IMR-90 (cell line): ENCODE measurements at regions of chr10 and their contacts with region 1.

Region 1: DNA sequence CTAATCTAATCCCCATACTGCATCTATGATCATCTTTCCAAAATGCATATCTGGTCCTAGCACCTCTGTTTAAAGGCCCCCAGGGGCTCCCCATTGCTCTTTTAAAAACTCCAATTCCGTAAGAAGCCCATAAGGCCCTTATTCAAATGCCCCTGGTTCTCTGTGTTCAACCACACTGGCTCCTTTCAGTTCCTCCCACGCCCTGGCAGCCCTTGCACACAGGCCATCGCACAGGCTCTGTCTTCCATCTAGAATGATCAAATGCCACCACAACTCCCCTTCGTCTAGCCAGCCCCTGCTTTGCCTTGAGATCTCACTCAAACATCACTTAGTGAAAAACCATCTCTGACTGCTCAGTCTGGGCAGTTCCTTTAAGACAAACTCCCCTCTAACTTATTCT is 112.9 kb upstream of the LYZL2 start:
- DNase-seq: no peak
- ATAC-seq: no peak
- H3K4me3 ChIP-seq: no peak overlapping the region
- H3K27ac ChIP-seq: no peak overlapping the region
- H3K4me1 ChIP-seq: peaks cover 10% of the 10 kb centered on the region
- H3K27me3 ChIP-seq: no peaks in the 10 kb centered on the region
- CTCF ChIP-seq: no peak
- POLR2A ChIP-seq: no peak
- RAD21 ChIP-seq: no peak

Region 2: GRCh38 chr10:31508882-31509281 is 766.4 kb after region 1 on chr10:
- CTCF ChIA-PET with region 1: no interaction called
- POLR2A ChIA-PET with region 1: no interaction called
- dilution Hi-C with region 1: no loop called
- in situ Hi-C with region 1: loop called (anchors 10 kb)
- intact Hi-C with region 1: no loop called
- DNase-seq: peak; percentile 59
- ATAC-seq: peak; percentile 57
- H3K4me3 ChIP-seq: no peak overlapping the region
- H3K27ac ChIP-seq: no peak overlapping the region
- H3K4me1 ChIP-seq: peaks cover 9% of the 10 kb centered on the region
- H3K27me3 ChIP-seq: no peaks in the 10 kb centered on the region
- CTCF ChIP-seq: no peak
- POLR2A ChIP-seq: no peak
- RAD21 ChIP-seq: no peak

Region 3: GRCh38 chr10:31819391-31819820 is 1076.9 kb after region 1 on chr10:
- CTCF ChIA-PET with region 1: no interaction called
- POLR2A ChIA-PET with region 1: no interaction called
- dilution Hi-C with region 1: no loop called
- in situ Hi-C with region 1: loop called (anchors 10 kb)
- intact Hi-C with region 1: no loop called
- DNase-seq: no peak
- ATAC-seq: no peak
- H3K4me3 ChIP-seq: no peak overlapping the region
- H3K27ac ChIP-seq: no peak overlapping the region
- H3K4me1 ChIP-seq: peaks cover 2% of the 10 kb centered on the region; the same call in 1 of the 2 replicates
- H3K27me3 ChIP-seq: no peaks in the 10 kb centered on the region
- CTCF ChIP-seq: no peak
- POLR2A ChIP-seq: no peak
- RAD21 ChIP-seq: no peak